OCI-LY7 (cell line): ENCODE measurements at regions of chr2 and their contacts with region 1.

Region 1: DNA sequence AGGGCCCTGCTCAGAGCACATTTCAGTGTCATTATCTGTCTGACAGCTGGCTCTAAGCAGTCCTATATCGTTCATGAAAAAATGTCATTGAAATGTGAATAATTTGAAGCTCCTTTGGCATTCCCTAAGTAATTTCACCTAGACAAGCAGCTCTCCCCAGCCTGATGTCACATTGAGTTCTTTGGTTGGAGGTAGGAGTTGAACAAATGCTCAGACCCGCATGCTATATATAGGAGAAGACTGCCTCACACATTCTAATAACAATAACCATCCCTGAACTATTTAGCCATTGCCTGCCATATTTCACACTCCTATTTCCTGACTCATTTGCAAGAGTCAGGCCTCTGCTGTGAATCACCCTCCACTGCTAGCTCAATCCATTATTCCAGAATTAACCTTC is 256.7 kb upstream of the ACVR2A start:
- DNase-seq: no peak
- H3K4me3 ChIP-seq: no peak overlapping the region
- H3K27ac ChIP-seq: no peak overlapping the region
- H3K4me1 ChIP-seq: no peaks in the 10 kb centered on the region
- CTCF ChIP-seq: no peak

Region 2: GRCh38 chr2:147525819-147526489 is 62.2 kb before region 1 on chr2:
- CTCF ChIA-PET with region 1: no interaction called
- POLR2A ChIA-PET with region 1: no interaction called
- intact Hi-C with region 1: no loop called
- DNase-seq: no peak
- H3K4me3 ChIP-seq: no peak overlapping the region
- H3K27ac ChIP-seq: no peak overlapping the region
- H3K4me1 ChIP-seq: no peaks in the 10 kb centered on the region
- CTCF ChIP-seq: no peak

Region 3: GRCh38 chr2:147547440-147547839 is 40.7 kb before region 1 on chr2:
- CTCF ChIA-PET with region 1: no interaction called
- POLR2A ChIA-PET with region 1: no interaction called
- intact Hi-C with region 1: no loop called
- DNase-seq: no peak
- H3K4me3 ChIP-seq: no peak overlapping the region
- H3K27ac ChIP-seq: no peak overlapping the region
- H3K4me1 ChIP-seq: no peaks in the 10 kb centered on the region
- CTCF ChIP-seq: no peak

Region 4: DNA sequence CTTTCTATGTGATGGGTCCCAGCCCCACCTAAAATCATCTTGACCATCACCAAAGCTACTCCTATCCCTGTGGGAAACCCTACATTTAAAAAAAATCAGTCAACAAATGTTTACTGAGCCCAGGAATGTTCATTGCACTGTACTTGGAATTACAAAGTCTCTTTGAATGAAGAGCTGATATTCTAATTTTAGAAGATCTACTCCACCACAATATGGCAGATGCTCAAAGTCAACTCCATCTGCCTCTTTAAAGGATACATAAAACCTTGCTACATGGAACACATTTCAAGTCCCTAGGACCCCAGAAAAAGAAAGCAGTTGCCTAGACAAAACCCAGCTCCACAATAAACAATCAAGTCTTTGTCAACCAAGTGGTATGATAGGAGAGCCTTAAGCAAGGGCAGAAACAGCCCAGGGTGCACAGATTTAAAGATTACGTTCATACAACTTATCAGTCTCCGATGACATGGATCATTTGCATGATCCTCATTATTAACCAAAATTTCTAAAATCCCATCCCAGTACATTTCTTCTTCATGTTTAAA is 22.4 kb after region 1 on chr2:
- CTCF ChIA-PET with region 1: no interaction called
- POLR2A ChIA-PET with region 1: no interaction called
- intact Hi-C with region 1: loop called (anchors 1 kb)
- DNase-seq: no peak
- H3K4me3 ChIP-seq: no peak overlapping the region
- H3K27ac ChIP-seq: no peak overlapping the region
- H3K4me1 ChIP-seq: no peaks in the 10 kb centered on the region
- CTCF ChIP-seq: no peak